ENCODE measurements at regions of chr11 and their contacts with region 1.

Region 1: GRCh38 chr11:128776424-128777284 is 82.8 kb downstream of the FLI1 start:
- DNase-seq: peak; percentile 43 to 61 (median 56)
- H3K4me3 ChIP-seq: no peak overlapping the region
- H3K4me3 Mint-ChIP-seq: peak overlapping the region in 4 of 8 donors; percentile 21 to 63 (median 36)
- H3K27ac ChIP-seq: no peak overlapping the region
- H3K27ac Mint-ChIP-seq: peak overlapping the region; percentile 62 to 91 (median 81)
- H3K4me1 ChIP-seq: peaks cover 62% of the 10 kb centered on the region
- H3K4me1 Mint-ChIP-seq: peaks cover 56 to 93% (median 72%) of the 10 kb centered on the region in 4 donors
- H3K27me3 ChIP-seq: no peaks in the 10 kb centered on the region
- H3K27me3 Mint-ChIP-seq: no peaks in the 10 kb centered on the region

Region 2: GRCh38 chr11:128765571-128766549 is 10.8 kb before region 1 on chr11:
- CTCF ChIA-PET with region 1: interaction called, 11 read pairs
- POLR2A ChIA-PET with region 1: interaction called, 4 read pairs
- intact Hi-C with region 1: no loop called
- DNase-seq: no peak
- H3K4me3 ChIP-seq: no peak overlapping the region
- H3K4me3 Mint-ChIP-seq: no peak overlapping the region
- H3K27ac ChIP-seq: no peak overlapping the region
- H3K27ac Mint-ChIP-seq: peak overlapping the region in 2 of 7 donors; percentile 22 to 48
- H3K4me1 ChIP-seq: peaks cover 3% of the 10 kb centered on the region
- H3K4me1 Mint-ChIP-seq: peaks cover 16 to 71% (median 37%) of the 10 kb centered on the region in 4 donors
- H3K27me3 ChIP-seq: no peaks in the 10 kb centered on the region
- H3K27me3 Mint-ChIP-seq: no peaks in the 10 kb centered on the region

Region 3: GRCh38 chr11:128848815-128849455 is 72.3 kb after region 1 on chr11:
- CTCF ChIA-PET with region 1: interaction called, 13 read pairs
- POLR2A ChIA-PET with region 1: no interaction called
- intact Hi-C with region 1: loop called (anchors 1 kb)
- DNase-seq: peak in 4 of 5 donors; percentile 46 to 62 (median 56)
- H3K4me3 ChIP-seq: no peak overlapping the region
- H3K4me3 Mint-ChIP-seq: peak overlapping the region in 1 of 8 donors; percentile 27
- H3K27ac ChIP-seq: no peak overlapping the region
- H3K27ac Mint-ChIP-seq: peak overlapping the region in 5 of 7 donors; percentile 3 to 78 (median 46)
- H3K4me1 ChIP-seq: peaks cover 35% of the 10 kb centered on the region
- H3K4me1 Mint-ChIP-seq: peaks cover 23 to 42% (median 37%) of the 10 kb centered on the region in 4 donors
- H3K27me3 ChIP-seq: no peaks in the 10 kb centered on the region
- H3K27me3 Mint-ChIP-seq: no peaks in the 10 kb centered on the region

Region 4: DNA sequence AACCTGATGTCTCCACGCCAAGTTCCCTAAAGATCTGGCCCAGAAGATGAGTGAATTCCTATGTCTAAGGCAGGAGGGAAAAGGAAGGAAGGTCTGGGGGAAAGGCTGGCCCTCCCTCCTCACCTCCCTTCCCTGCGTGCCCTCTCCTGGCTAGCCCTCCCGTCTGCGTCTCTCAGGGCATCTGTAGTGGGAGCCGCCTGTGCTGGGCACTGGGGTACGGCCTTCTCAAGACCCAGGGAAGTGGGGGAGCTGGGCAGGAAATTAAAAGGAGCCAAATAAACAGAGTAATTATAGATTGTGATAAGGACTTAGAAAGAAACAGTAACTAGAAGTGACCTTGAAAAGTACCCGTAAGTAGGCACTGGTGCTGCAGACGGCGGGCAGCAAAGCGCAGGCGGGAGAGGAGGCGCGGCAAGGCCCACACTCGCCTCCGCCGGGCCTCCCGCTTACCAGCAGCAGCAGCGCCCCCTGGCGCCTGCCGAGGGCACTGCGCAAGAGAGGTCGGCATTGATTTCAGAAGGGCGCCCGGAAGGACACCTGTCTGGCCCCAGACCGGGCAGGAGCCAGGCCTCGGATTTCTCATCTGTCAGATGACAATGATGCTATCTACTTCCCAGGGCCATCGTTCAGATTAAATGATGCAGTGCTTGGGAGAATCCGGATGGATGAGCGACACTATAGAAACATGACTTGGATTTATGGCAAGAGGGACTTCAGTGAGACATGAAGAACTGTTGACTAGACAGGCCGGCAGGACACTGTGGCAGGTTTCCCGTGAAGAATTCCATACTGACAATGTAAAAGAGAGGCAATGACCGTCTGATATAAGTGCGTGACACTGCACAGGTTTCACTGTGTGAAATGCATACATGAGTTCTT is 83.1 kb after region 1 on chr11:
- CTCF ChIA-PET with region 1: interaction called, 8 read pairs
- POLR2A ChIA-PET with region 1: no interaction called
- intact Hi-C with region 1: loop called (anchors 1 kb)
- DNase-seq: peak; percentile 66 to 76 (median 73)
- H3K4me3 ChIP-seq: no peak overlapping the region
- H3K4me3 Mint-ChIP-seq: peak overlapping the region in 2 of 8 donors; percentile 14 to 32
- H3K27ac ChIP-seq: no peak overlapping the region
- H3K27ac Mint-ChIP-seq: peak overlapping the region in 2 of 7 donors; percentile 14 to 71
- H3K4me1 ChIP-seq: no peaks in the 10 kb centered on the region
- H3K4me1 Mint-ChIP-seq: peaks cover 4 to 11% (median 7%) of the 10 kb centered on the region in 4 donors
- H3K27me3 ChIP-seq: no peaks in the 10 kb centered on the region
- H3K27me3 Mint-ChIP-seq: peaks cover 0 to 2% of the 10 kb centered on the region in 2 donors